ENCODE measurements at regions of chr5 and their contacts with region 1.

Region 1: DNA sequence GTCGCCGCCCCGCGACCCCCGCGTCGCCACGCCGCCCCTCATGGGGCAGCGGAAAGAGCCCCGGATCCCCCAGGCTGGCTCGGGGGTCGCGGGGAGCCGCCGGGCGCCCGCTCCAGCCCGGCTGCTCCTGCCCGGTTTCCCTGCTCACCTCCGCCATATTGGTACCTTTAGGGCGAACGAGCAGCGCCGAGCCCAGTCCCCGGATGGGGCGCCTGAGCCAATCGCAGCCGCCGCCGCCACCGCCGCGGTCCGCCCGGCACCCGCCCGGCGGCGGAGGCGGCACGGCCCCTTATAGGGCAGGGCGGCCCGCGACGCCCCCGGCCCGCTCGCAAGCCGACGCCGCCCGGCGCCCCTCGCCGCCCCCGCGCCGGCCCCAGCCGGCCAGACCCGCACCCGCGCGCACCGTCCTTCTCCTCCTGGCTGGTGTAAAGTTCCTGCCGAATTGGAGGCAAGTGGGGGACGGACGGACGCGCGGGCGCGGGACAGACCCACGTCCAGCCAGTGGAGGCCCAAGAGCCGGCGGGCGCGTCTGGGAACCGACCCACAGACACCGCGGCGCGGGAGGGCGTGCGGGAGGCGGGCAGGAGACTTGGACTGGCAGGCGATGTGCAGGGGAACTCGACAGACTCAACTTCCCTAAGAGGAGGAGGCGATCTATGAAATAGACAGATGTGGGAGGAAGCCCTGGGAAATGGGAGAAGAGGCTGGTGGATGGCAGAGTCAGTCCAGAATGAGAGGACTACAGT is at the start of gene MIER3:
- H3K4me3 ChIP-seq: peak within 1 kb of the TSS; percentile 69
- H3K27ac ChIP-seq: peak within 1 kb of the TSS; percentile 89
- H3K4me1 ChIP-seq: 0 out of 2 replicates have a peak, but pooled peaks cover 5% of the 10 kb centered on the region
- CTCF ChIP-seq: peak; percentile 43

Region 2: DNA sequence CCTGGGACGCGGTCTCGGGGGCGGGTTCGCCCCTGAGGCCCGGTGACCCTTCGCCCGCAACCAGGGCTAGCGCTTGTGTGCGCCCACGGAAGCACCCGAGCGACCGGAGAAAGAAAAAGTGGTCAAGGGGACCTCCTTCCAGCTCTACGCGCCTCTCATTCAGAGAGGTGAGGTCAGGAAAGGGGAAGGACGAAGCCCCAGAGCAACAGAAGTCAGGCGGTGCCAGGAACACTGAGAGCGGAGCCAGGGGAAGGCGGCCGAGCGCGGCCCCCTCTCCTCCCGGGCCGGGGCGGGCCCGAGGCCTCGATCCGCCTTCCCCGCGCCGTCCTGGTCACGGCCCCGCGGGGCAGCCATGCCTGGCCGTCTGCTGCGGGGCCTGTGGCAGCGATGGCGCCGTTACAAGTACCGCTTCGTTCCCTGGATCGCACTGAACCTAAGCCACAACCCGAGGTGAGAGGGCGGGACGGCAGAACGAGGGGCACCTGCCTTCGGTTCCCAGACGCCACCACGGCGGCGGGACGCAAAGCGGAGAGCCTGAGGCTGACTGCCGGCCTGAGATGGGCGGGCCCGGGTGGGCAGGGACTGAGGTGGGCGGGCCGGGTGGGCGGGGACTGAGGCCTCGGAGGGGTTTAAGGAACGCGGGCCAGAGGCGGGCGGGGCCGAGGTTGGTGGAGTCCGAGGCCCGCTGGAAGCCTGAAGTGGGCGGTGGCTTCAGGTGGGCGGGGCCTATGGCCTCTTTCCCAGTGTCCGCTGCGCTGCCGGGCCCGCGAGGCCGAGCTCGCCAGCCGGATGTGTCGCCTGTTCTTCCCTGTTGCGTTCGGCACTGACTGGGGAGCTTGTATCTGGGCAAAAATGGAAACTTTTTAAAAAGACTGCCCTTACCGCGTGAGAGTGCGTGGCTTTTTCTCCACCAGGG is 42.6 kb before region 1 on chr5 and contains the start of gene SETD9:
- CTCF ChIA-PET with region 1: no interaction called
- POLR2A ChIA-PET with region 1: interaction called, 18 read pairs
- H3K4me3 ChIP-seq: peak within 1 kb of the TSS; percentile 88
- H3K27ac ChIP-seq: peak within 1 kb of the TSS; percentile 92
- H3K4me1 ChIP-seq: no peaks in the 10 kb centered on the region
- CTCF ChIP-seq: no peak

Region 3: GRCh38 chr5:56922922-56923321 is 29.2 kb before region 1 on chr5:
- CTCF ChIA-PET with region 1: no interaction called
- POLR2A ChIA-PET with region 1: no interaction called
- H3K4me3 ChIP-seq: no peak overlapping the region
- H3K27ac ChIP-seq: no peak overlapping the region
- H3K4me1 ChIP-seq: no peaks in the 10 kb centered on the region
- CTCF ChIP-seq: no peak